PC-3 (cell line): ENCODE measurements at regions of chr1 and their contacts with region 1.

Region 1: DNA sequence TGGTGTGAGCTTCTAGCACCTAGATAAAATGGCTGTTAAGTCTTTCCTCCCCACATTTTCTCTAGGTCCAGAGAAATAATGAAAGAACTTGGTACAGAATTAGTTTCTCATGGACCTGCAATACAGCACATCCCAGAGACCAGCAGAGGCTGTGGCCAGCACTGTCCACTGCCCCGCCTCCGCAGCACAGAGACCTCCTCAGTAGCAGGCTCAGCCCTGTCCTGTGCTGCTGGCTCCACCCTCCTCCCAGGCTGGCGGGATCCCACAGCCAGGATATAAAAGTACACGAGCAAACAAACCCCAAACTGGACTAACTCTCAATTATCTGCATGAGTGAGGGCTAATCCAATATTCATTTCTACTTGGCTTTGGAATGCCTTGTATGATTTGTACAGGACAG is 401.5 kb downstream of the RPS6KC1 start:
- DNase-seq: no peak
- ATAC-seq: no peak
- H3K4me3 ChIP-seq: no peak overlapping the region
- H3K27ac ChIP-seq: no peak overlapping the region
- H3K4me1 ChIP-seq: no peaks in the 10 kb centered on the region
- H3K27me3 ChIP-seq: peaks cover 83% of the 10 kb centered on the region
- CTCF ChIP-seq: no peak

Region 2: GRCh38 chr1:213399695-213400094 is 52.8 kb before region 1 on chr1:
- CTCF ChIA-PET with region 1: no interaction called
- POLR2A ChIA-PET with region 1: interaction called, 13 read pairs
- intact Hi-C with region 1: no loop called
- DNase-seq: no peak
- ATAC-seq: no peak
- H3K4me3 ChIP-seq: no peak overlapping the region
- H3K27ac ChIP-seq: no peak overlapping the region
- H3K4me1 ChIP-seq: no peaks in the 10 kb centered on the region
- H3K27me3 ChIP-seq: peaks cover 70% of the 10 kb centered on the region
- CTCF ChIP-seq: no peak